Mammary epithelial cell (primary cell): ENCODE measurements at regions of chr4 and their contacts with region 1.

Region 1: GRCh38 chr4:64158648-64159326 is 250.5 kb downstream of the TECRL start:
- DNase-seq: peak; percentile 43
- H3K4me3 ChIP-seq: peak overlapping the region in 2 of 3 experiments; percentile 39 to 53
- H3K27ac ChIP-seq: no peak overlapping the region
- H3K4me1 ChIP-seq: no peaks in the 10 kb centered on the region
- H3K27me3 ChIP-seq: no peaks in the 10 kb centered on the region
- CTCF ChIP-seq: peak; percentile 62 to 79

Region 2: DNA sequence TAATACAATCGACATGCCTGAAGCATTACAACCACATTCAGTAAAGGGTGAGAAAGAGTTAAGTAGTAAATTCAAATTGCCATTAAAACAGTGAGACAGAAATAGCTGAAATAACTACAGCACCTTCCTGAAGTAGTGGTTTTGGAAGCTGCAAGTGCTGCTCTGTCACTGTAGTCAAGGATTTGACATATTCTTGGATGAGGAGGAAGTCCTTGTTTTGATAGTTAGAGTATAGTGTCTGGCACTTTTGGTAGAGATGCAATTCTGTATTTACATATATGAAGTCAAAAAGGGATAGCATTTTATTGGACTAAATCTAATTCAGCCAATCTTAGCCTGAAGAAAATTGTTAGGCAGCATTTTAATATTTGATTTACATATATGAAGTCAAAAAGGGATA is 1309.1 kb before region 1 on chr4:
- CTCF ChIA-PET with region 1: no interaction called
- dilution Hi-C with region 1: no loop called
- in situ Hi-C with region 1: no loop called
- intact Hi-C with region 1: no loop called
- DNase-seq: no peak
- H3K4me3 ChIP-seq: no peak overlapping the region
- H3K27ac ChIP-seq: no peak overlapping the region
- H3K4me1 ChIP-seq: no peaks in the 10 kb centered on the region
- H3K27me3 ChIP-seq: no peaks in the 10 kb centered on the region
- CTCF ChIP-seq: no peak

Region 3: GRCh38 chr4:64341711-64342110 is 182.9 kb after region 1 on chr4:
- CTCF ChIA-PET with region 1: no interaction called
- dilution Hi-C with region 1: no loop called
- in situ Hi-C with region 1: no loop called
- intact Hi-C with region 1: no loop called
- DNase-seq: no peak
- H3K4me3 ChIP-seq: no peak overlapping the region
- H3K27ac ChIP-seq: no peak overlapping the region
- H3K4me1 ChIP-seq: no peaks in the 10 kb centered on the region
- H3K27me3 ChIP-seq: no peaks in the 10 kb centered on the region
- CTCF ChIP-seq: no peak

Region 4: DNA sequence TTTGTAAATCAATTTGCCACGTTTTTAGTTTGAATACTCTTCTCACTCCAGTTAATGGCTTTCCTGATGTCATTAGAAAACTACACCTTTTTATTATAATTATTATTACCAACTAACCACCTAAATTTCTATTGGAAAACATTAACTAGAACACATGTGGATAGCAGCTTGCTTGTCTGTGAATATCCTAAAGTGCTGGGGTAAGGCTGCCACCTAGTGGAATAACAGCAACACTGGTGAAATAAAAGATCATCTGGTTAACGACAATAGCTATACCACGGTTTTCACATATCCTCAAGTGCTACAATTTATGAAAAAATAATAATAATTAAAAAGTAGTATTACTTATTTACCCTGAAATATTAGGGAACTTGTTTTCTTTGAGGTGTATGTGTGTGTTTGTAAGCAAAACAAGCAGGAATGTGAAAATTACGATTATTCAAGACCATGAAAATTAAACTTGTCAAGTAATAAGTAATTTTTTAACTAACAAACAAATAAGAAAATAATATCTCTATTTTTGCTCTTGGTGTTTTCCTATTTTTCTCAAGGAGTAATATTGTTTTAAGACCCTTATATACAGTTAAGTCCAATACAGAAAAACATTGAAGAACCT is 380.6 kb after region 1 on chr4:
- CTCF ChIA-PET with region 1: no interaction called
- dilution Hi-C with region 1: loop called (anchors 25 kb)
- in situ Hi-C with region 1: loop called (anchors 25 kb)
- intact Hi-C with region 1: loop called (anchors 1 kb)
- DNase-seq: peak; percentile 37
- H3K4me3 ChIP-seq: no peak overlapping the region
- H3K27ac ChIP-seq: no peak overlapping the region
- H3K4me1 ChIP-seq: no peaks in the 10 kb centered on the region
- H3K27me3 ChIP-seq: no peaks in the 10 kb centered on the region
- CTCF ChIP-seq: peak; percentile 78 to 80

Region 5: GRCh38 chr4:64582492-64582891 is 423.7 kb after region 1 on chr4:
- CTCF ChIA-PET with region 1: no interaction called
- dilution Hi-C with region 1: no loop called
- in situ Hi-C with region 1: no loop called
- intact Hi-C with region 1: loop called (anchors 2 kb)
- DNase-seq: no peak
- H3K4me3 ChIP-seq: no peak overlapping the region
- H3K27ac ChIP-seq: no peak overlapping the region
- H3K4me1 ChIP-seq: no peaks in the 10 kb centered on the region
- H3K27me3 ChIP-seq: no peaks in the 10 kb centered on the region
- CTCF ChIP-seq: no peak